Gastrocnemius medialis (tissue), 4 donors: ENCODE measurements at regions of chr11 and their contacts with region 1.

Region 1: GRCh38 chr11:22337596-22338485 is at the start of gene SLC17A6:
- DNase-seq: no peak
- ATAC-seq: no peak
- H3K4me3 ChIP-seq: no peak within 1 kb of the TSS
- H3K27ac ChIP-seq: no peak within 1 kb of the TSS
- H3K4me1 ChIP-seq: no peaks in the 10 kb centered on the region
- H3K27me3 ChIP-seq: peaks cover 47 to 55% (median 51%) of the 10 kb centered on the region in 3 donors
- CTCF ChIP-seq: no peak
- POLR2A ChIP-seq: no peak
- total RNA-seq, gene SLC17A6: not detected

Region 2: GRCh38 chr11:21948865-21949264 is 389.0 kb before region 1 on chr11:
- in situ Hi-C with region 1: no loop called
- intact Hi-C with region 1: no loop called
- DNase-seq: no peak
- ATAC-seq: no peak
- H3K4me3 ChIP-seq: no peak overlapping the region
- H3K27ac ChIP-seq: no peak overlapping the region
- H3K4me1 ChIP-seq: no peaks in the 10 kb centered on the region
- H3K27me3 ChIP-seq: no peaks in the 10 kb centered on the region
- CTCF ChIP-seq: no peak
- POLR2A ChIP-seq: no peak

Region 3: DNA sequence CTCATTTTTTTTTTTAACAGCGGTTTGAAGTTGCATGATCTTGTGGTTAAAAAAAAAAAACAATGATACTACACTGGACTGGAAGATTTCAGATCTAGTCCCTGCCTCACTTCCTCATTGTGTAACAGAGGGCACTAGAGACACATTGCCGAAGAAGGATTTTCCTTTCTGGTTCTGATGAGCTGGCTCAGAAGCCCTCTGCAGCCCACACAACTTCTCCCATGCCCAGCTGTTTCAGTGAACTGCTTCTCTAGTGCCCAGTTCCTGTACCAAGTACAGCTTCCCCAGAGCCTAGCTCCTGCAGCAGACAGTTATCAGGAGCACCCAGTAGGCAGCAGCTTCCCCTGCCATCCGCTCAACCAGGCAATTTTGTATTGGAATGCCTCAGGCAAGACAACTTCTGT is 174.4 kb before region 1 on chr11:
- in situ Hi-C with region 1: no loop called
- intact Hi-C with region 1: no loop called
- DNase-seq: peak in 1 of 2 donors; percentile 16
- ATAC-seq: peak in 1 of 2 donors; percentile 33
- H3K4me3 ChIP-seq: no peak overlapping the region
- H3K27ac ChIP-seq: no peak overlapping the region
- H3K4me1 ChIP-seq: peaks cover 0 to 4% of the 10 kb centered on the region in 2 donors
- H3K27me3 ChIP-seq: no peaks in the 10 kb centered on the region
- CTCF ChIP-seq: no peak
- POLR2A ChIP-seq: no peak

Region 4: DNA sequence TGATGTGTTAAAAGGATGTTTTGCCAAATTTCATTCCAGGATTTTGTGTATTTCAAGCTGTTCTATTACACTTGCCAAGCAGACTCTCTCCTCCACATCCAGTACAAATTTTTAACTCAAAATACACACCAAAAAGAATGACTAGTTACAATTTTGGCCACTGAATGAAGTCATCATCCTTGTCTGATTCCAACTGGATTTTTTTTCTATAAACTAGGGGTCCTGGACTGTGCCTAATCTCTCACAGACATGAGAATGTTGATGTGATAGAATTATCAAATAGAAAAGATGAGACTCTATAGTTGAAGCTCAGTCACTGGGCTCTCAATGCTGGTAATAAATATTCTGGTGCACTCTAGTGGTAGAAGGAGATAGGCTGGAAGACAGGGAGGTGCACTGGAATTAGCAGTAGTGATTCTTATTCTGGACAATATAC is 202.0 kb after region 1 on chr11:
- in situ Hi-C with region 1: loop called in 3 of 4 experiments (anchors 10 kb)
- intact Hi-C with region 1: loop called (anchors 1 kb)
- DNase-seq: no peak
- ATAC-seq: no peak
- H3K4me3 ChIP-seq: no peak overlapping the region
- H3K27ac ChIP-seq: no peak overlapping the region
- H3K4me1 ChIP-seq: no peaks in the 10 kb centered on the region
- H3K27me3 ChIP-seq: no peaks in the 10 kb centered on the region
- CTCF ChIP-seq: peak in 4 of 5 experiments; percentile 20 to 52 (median 38)
- POLR2A ChIP-seq: no peak

Region 5: DNA sequence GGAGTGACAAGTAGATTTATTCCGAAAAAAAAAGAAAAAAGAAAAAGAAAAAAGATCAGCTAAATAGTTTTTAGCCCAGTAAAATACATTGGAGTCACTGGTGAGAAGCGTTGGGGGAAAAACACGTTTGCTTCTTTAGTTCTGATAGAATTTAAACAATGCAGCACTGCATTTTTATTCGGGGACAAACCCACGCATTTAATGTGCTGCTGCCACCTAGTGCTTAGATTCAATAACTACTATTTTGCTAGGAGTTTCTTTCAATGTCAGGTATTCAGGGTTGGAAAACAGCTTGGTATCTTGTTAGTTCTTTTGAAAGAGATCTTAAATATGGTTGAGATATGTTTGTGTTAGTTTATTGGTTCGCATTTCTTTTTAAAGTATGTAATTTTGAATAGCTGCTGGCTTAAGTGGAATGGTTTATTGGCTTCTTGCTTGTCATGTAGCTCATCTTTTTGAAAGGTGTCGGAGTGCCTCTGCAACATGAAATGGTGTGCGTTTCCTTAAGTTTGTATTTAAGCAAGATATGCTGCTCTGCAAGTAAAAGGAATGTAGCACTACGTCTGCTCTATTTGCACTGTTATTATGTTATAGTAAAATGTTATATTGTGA is 449.8 kb after region 1 on chr11:
- in situ Hi-C with region 1: loop called (anchors 5 to 25 kb)
- intact Hi-C with region 1: loop called (anchors 1 kb)
- DNase-seq: no peak
- ATAC-seq: peak; percentile 52 to 73
- H3K4me3 ChIP-seq: peak overlapping the region in 1 of 4 donors; percentile 3
- H3K27ac ChIP-seq: no peak overlapping the region
- H3K4me1 ChIP-seq: no peaks in the 10 kb centered on the region
- H3K27me3 ChIP-seq: no peaks in the 10 kb centered on the region
- CTCF ChIP-seq: peak; percentile 40 to 82 (median 63)
- POLR2A ChIP-seq: no peak